Posterior vena cava (tissue), 2 donors: ENCODE measurements at regions of chr9 and their contacts with region 1.

Region 1: DNA sequence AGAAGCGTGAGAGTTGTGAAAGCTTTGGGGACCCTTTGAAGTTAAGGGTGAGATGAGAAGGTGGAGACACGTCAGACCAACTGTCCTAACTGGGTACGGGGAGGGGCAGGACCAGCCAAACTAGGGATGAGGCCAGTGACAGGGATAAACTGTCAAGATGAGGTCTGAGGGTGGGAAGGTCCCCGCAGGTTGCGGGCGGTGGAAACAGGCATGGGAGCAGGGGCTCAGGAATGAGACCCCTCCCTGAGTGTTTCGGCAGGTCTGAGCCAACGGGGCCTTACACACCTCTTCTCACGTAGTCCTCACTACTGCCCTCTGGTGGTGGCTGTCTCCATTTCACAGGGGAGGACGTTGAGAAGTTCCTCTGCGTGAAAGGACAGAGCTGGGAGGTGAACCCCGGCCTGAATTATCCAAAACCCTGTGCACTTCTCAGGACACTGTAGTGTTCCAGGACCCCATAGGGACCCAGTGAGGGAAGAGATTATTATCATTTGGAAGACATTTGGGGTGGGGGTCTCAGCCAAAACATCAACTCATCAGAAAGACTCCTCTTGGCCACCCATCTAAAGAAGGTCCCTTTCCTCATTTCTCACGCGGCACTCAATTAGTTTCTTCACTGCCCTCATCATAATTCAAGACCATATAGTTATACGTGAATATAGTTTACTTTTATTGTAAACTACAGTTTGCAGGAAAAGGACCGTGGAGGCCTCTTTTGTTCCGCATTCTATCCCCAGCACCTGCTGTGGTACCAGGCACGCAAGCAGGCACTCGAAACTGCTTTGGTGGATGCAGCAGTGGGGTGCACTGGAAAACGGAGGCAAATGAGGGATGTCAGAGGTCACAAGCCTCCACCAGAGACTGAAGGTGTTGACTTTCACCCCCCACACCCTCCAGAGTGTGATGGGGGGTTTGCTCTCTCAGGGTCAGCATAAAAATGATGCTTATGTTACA is 21.7 kb upstream of the NANS start:
- DNase-seq: peak; percentile 94

Region 2: GRCh38 chr9:97921959-97922724 is 112.7 kb before region 1 on chr9 and contains the start of gene TRMO:
- intact Hi-C with region 1: loop called (anchors 2 to 10 kb)
- DNase-seq: peak; percentile 99
- total RNA-seq, gene TRMO: 7.0 to 8.7 TPM